G401 (cell line): ENCODE measurements at regions of chr10 and their contacts with region 1.

Region 1: DNA sequence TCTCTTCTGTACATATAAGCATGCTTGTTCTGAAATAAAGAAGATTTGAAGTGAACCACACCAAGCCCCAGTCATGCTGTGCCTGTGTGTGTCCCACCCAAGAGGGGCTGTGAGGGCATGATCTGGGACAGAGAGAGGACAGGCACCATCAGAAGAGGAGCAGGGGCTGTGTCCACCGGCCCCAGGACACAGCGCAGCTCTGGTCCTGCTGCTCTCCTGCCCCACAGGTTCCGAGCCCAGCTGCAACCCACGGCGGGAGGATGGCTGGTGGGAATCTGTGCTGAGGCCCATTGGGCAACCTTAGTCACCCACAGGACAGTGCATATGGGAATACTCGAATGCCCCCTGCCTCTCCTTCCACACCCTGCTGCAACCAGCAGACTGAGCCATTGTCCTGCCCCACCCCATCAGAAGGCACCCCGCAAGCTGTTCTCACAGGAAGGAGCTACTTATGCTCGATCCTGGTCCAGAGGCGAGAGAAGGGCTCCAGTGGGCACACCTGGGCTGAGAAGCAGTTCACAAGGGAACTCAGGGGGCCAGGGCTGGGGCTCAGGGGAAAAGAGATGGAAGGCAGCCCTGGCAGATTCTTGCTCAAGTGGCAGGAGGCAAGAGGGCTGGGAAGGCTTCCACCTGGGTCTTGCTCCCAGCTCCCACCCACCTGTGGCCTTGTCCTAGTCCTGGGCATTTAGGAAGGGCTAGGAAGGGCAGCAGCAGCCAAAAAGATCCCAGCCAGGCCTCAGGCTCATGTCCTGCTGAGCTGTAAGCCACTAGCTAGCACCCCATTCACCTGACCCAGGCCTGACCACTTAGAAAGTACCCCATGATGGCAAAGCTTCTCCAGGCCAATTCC is 31.9 kb downstream of the LDB3 start:
- DNase-seq: no peak

Region 2: GRCh38 chr10:86730227-86730626 is 30.0 kb after region 1 on chr10:
- in situ Hi-C with region 1: no loop called
- DNase-seq: no peak

Region 3: DNA sequence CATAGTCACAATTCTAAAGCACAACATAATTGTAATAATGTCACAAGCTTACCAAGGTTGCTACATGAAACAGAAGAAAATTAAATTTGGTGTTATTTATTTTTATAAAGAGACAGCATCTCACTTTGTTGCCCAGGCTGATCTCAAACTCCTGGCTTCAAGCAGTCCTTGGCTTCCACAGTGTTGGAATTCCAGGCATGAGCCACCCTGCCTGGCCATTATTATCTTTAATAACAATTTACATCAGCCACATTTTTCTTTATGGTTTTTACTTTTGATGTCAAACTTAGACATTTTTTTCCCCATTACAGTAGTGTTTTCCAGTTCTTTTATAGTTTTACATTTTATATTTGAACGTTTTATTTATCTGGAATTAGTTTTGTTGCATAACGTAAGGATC is 102.9 kb after region 1 on chr10:
- in situ Hi-C with region 1: loop called (anchors 5 kb)
- DNase-seq: no peak

Region 4: GRCh38 chr10:86821388-86821999 is 121.3 kb after region 1 on chr10:
- in situ Hi-C with region 1: no loop called
- DNase-seq: no peak